ENCODE measurements at regions of chr5 and their contacts with region 1.

Region 1: DNA sequence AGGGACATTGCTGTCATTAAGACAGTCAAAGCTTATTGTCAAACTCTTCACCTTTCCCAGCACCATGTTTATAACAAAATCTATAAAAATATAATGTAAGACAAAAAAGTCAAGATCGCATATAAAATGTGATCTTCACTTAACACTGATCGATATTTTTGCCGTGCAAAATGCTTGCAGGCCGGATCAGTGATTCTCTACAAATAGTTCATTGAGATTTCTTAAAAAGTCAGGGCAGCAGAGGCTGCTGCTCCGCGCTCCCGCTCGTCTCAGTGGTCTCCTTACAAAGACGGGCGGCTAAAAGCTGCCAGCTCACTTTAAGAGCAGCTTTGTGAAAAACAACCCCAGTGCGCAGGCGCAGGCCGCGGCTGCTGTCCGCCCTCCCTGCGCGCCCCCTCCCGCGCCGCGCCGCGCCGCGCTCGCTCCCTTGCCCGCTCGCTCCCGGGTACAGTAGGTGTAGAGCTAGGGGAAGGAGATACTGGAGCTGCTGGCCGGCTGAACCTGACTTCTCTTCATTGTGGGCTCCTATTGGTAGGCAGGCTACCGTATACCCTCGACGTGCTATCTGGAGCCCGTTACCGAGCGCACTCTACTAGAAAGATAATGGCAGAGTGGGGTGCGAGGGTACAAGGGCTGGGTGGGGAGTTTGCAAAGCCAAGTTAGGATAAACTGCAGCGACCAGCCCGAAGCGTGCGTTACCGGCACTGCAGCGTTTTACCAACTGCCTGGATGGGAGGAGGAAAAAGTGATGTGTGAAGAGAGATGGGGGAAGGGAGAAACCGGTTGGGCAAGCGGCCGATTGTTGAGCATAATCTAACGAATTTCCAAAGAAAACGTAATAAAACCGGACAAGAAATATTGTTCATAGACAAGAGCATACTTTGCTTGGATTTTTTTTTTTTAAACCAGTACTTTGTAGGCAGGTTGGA is at the start of gene ARRDC3:
- DNase-seq: peak; percentile 91
- H3K4me3 ChIP-seq: peak within 1 kb of the TSS; percentile 86
- H3K27ac ChIP-seq: peak within 1 kb of the TSS; percentile 82
- H3K27me3 ChIP-seq: no peaks in the 10 kb centered on the region
- CTCF ChIP-seq: no peak
- polyA plus RNA-seq, gene ARRDC3: 26.7 and 38.3 TPM in 2 replicates

Region 2: DNA sequence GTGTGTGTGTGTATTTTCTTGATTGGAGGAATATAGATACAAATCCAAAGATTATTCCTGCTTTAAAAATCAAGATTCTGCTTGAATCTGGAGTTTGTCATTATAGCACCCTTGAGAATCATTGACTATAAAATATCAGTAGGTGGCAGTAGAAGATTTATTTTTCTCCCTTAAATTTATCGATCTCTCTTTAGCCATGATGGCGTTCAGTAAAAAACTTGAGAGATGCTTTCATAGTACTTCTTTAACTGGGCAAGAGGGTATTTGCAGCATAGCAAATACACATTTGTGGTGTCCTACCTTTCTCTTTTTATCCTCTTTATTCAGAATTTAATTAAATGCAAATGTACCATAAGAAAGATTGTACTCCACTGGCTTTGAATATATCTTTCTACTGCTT is 517.0 kb before region 1 on chr5:
- CTCF ChIA-PET with region 1: interaction called, 52 read pairs
- POLR2A ChIA-PET with region 1: no interaction called
- DNase-seq: no peak
- H3K4me3 ChIP-seq: no peak overlapping the region
- H3K27ac ChIP-seq: no peak overlapping the region
- H3K27me3 ChIP-seq: no peaks in the 10 kb centered on the region
- CTCF ChIP-seq: peak; percentile 45

Region 3: GRCh38 chr5:91072871-91073270 is 310.4 kb before region 1 on chr5:
- CTCF ChIA-PET with region 1: interaction called, 17 read pairs
- POLR2A ChIA-PET with region 1: interaction called, 3 read pairs
- DNase-seq: peak; percentile 49
- H3K4me3 ChIP-seq: no peak overlapping the region
- H3K27ac ChIP-seq: no peak overlapping the region
- H3K27me3 ChIP-seq: no peaks in the 10 kb centered on the region
- CTCF ChIP-seq: no peak

Region 4: DNA sequence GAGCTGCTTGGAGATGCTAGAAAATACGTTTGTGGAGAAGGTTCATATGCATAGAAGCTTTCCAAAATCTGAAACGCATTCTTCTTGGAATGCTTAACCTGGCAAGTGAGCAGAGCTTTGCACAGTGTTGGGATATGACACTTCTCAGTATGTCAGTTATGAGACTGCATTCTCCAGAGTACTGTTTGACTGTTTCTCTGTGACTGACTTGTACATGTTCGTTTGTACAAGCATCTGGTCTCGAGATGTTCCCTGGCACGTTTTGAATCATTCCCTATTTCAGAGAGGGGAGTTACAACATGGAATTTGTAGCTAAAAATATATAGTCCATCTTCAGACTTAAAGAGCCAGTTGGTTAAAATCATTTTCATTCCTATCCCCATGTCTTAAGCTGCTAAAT is 272.6 kb before region 1 on chr5:
- CTCF ChIA-PET with region 1: interaction called, 23 read pairs
- POLR2A ChIA-PET with region 1: interaction called, 5 read pairs
- DNase-seq: no peak
- H3K4me3 ChIP-seq: no peak overlapping the region
- H3K27ac ChIP-seq: no peak overlapping the region
- H3K27me3 ChIP-seq: no peaks in the 10 kb centered on the region
- CTCF ChIP-seq: no peak

Region 5: DNA sequence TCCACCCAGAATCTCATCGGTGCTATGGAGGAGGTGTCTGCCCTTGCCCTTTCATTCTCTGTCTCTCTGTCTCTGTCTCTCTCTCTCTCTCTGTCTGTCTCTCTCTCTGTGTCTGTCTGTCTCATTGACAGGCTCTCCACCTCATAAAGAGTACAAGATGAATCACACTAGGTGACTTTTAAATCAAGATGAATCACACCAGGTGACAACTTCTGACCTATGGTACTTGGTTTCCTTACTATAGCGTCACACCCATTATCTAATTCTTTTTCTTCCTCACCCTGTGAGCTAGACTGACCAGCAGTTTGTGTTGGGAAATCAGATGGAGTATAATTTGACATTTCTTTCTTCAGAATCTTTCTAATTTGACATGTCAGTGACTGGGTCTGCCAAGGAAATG is 233.1 kb before region 1 on chr5:
- CTCF ChIA-PET with region 1: interaction called, 4 read pairs
- POLR2A ChIA-PET with region 1: interaction called, 13 read pairs
- DNase-seq: no peak
- H3K4me3 ChIP-seq: no peak overlapping the region
- H3K27ac ChIP-seq: no peak overlapping the region
- H3K27me3 ChIP-seq: no peaks in the 10 kb centered on the region
- CTCF ChIP-seq: no peak

Region 6: DNA sequence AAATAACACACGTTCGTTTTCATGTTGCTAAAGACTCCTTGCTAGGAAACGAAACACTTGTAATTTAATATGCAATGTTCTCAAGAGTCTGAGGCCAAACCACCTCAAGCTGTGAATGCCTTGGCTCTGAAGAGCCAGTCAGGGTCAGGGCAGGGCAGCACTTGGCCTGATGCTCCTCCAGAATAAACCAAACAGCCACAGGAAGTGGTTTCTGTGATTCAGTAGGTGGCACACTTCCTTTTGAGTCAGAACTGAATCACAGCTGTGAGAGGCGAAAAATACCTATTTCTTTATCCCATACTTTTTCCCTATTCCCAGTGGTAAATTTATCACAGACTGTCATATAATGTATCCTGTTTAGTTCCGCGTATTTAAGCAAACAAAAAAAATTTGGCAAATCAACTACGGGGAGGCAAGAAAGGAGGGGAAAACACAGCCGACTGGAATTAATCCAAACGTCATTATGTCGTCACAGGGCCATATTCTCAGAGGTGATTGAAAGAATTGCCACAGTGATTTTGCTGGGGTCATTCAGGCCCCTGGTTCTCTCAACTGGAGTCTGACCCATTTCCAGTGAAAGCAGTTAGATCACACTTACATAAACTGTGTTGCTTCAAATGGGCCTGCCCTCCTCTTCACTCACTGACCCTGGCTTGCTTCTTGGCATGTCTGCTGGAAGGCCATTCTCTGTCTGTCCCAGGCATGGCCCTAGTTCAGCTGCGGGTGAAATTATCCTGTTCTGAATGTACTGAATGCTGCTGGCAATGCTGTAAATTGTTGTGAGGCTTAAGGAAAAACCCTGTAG is 71.4 kb before region 1 on chr5:
- CTCF ChIA-PET with region 1: interaction called, 8 read pairs
- POLR2A ChIA-PET with region 1: interaction called, 11 read pairs
- DNase-seq: peak; percentile 96
- H3K4me3 ChIP-seq: no peak overlapping the region
- H3K27ac ChIP-seq: peak overlapping the region; percentile 90
- H3K27me3 ChIP-seq: no peaks in the 10 kb centered on the region
- CTCF ChIP-seq: no peak

Region 7: GRCh38 chr5:91403438-91403837 is 20.1 kb after region 1 on chr5:
- CTCF ChIA-PET with region 1: interaction called, 47 read pairs
- POLR2A ChIA-PET with region 1: interaction called, 3 read pairs
- DNase-seq: peak; percentile 36
- H3K4me3 ChIP-seq: no peak overlapping the region
- H3K27ac ChIP-seq: no peak overlapping the region
- H3K27me3 ChIP-seq: no peaks in the 10 kb centered on the region
- CTCF ChIP-seq: no peak